Activated naive CD4-positive, alpha-beta T cell treated with anti-CD3 and anti-CD28 coated beads for 36 hours (primary cell): ENCODE measurements at regions of chr15 and their contacts with region 1.

Region 1: GRCh38 chr15:64067564-64068030 is 21.3 kb upstream of the DAPK2 start:
- DNase-seq: peak; percentile 81
- H3K4me3 Mint-ChIP-seq: no peak overlapping the region
- H3K27ac Mint-ChIP-seq: no peak overlapping the region
- H3K4me1 Mint-ChIP-seq: peaks cover 5% of the 10 kb centered on the region
- H3K27me3 Mint-ChIP-seq: no peaks in the 10 kb centered on the region

Region 2: GRCh38 chr15:63466378-63467192 is 601.0 kb before region 1 on chr15:
- CTCF ChIA-PET with region 1: interaction called, 5 read pairs
- intact Hi-C with region 1: loop called (anchors 5 kb)
- DNase-seq: peak; percentile 71
- H3K4me3 Mint-ChIP-seq: no peak overlapping the region
- H3K27ac Mint-ChIP-seq: no peak overlapping the region
- H3K4me1 Mint-ChIP-seq: peaks cover 23% of the 10 kb centered on the region
- H3K27me3 Mint-ChIP-seq: no peaks in the 10 kb centered on the region

Region 3: DNA sequence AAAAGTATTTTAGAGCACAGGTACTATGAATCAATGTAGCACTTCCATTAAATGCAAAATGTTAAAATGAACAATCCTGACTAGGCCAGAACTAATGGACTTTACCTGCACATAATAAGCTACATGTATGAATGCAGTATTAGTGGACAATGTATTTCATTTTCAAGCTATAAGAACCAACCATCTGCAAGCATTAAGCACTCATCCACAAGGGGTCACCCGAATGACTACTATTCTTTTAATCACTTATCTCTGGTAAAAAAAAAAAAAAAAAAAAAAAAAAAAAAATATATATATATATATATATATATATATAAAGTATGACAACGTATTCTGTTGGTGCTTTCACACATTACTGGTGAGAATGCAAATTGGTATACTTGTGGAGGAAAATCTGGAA is 241.1 kb before region 1 on chr15:
- CTCF ChIA-PET with region 1: interaction called, 10 read pairs
- intact Hi-C with region 1: loop called (anchors 2 kb)
- DNase-seq: peak; percentile 53
- H3K4me3 Mint-ChIP-seq: no peak overlapping the region
- H3K27ac Mint-ChIP-seq: peak overlapping the region; percentile 38
- H3K4me1 Mint-ChIP-seq: peaks cover 69% of the 10 kb centered on the region
- H3K27me3 Mint-ChIP-seq: no peaks in the 10 kb centered on the region

Region 4: DNA sequence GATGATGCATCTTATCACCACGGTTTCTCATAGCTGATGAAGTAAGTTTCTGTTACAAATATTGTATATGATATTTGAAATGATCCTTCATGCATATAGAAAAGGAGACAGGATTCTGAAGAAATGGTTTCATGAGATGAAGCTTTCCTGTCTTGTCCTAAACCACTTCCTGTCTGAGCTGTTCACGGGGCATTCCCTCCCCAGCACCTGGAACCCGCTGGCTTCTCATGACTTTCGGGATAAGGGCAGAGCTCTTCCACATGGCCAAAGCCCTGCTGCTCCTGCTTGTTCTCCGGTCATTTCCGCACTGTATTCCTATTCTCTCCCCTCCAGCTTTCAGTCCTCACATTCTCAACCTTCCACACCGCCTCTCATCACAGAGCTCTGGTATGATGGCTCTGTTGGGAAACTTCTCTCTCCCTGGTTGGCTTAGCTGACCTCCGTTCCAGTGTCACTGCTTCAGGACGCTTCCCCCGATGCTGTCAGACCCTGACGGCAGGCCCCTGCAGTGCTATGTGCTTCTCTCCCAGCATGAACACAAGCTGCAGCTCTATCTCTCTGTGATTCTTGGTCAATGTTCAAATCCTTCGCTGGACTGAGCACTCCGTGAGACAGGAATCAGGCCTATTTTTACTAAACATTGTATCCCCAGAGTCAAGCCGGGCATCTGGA is 147.0 kb before region 1 on chr15:
- CTCF ChIA-PET with region 1: interaction called, 12 read pairs
- intact Hi-C with region 1: no loop called
- DNase-seq: peak; percentile 48
- H3K4me3 Mint-ChIP-seq: no peak overlapping the region
- H3K27ac Mint-ChIP-seq: no peak overlapping the region
- H3K4me1 Mint-ChIP-seq: peaks cover 17% of the 10 kb centered on the region
- H3K27me3 Mint-ChIP-seq: no peaks in the 10 kb centered on the region